ENCODE measurements at regions of chr2 and their contacts with region 1.

Region 1: DNA sequence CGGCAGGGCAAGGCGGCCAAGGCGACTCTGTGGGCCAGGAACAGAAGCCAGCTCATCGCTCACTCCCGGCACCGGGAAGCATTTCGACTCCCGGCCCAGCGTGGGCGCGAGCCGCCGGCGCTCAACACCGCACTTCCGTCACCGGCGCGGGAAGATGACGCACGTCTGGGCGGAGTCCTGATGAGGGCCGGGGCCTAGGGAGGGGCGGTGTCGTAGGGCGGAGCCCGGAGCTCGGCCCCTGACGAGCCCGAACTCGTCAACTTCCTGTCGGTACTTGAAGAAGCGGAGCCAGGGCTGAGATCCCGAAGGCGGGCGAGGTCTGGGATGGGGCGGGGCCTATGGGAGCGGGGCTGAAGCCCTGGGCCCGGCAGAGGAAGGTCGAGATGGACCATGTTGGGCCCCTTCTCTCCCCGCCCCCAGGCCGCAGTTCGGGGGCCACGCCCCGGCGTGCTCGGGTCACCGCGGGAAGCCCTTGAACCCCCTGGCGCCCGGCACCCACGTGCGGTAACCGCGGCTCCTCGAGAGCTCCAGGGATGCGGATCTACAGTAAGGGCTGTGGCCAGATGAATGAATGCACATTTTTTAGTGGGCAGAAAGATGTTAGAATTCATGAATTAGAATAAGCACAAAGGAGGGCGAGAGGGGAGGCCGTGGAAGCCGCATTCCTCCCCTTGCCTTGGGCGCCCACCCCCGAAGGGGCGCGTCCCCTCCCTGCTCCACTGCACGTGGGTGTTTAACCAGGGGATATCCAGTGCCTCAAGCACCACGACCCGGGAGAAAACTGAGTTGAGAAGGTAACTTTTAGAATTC is at the start of gene RNASEH1:
- DNase-seq: peak; percentile 98 to 99 (median 99)
- ATAC-seq: peak; percentile 99 to 100 (median 100)
- H3K4me3 ChIP-seq: peak within 1 kb of the TSS; percentile 76 to 100 (median 98)
- H3K27ac ChIP-seq: peak within 1 kb of the TSS; percentile 81 to 97 (median 90)
- H3K4me1 ChIP-seq: peaks cover 0 to 20% (median 14%) of the 10 kb centered on the region in 12 donors
- H3K27me3 ChIP-seq: no peaks in the 10 kb centered on the region
- CTCF ChIP-seq: peak in 2 of 12 donors; percentile 11 to 14
- POLR2A ChIP-seq: peak in 1 of 2 donors; percentile 86
- total RNA-seq, gene RNASEH1: 18.3 to 23.6 (median 20.0) TPM

Region 2: GRCh38 chr2:3379647-3380534 is 178.5 kb before region 1 on chr2 and contains the start of gene TRAPPC12:
- intact Hi-C with region 1: loop called in 4 of 10 experiments (anchors 5 to 10 kb)
- DNase-seq: peak; percentile 90 to 95 (median 92)
- ATAC-seq: peak; percentile 83 to 92 (median 91)
- H3K4me3 ChIP-seq: peak within 1 kb of the TSS; percentile 51 to 92 (median 84)
- H3K27ac ChIP-seq: peak within 1 kb of the TSS; percentile 42 to 96 (median 92)
- H3K4me1 ChIP-seq: peaks cover 0 to 41% (median 32%) of the 10 kb centered on the region in 12 donors
- H3K27me3 ChIP-seq: no peaks in the 10 kb centered on the region
- CTCF ChIP-seq: peak in 9 of 12 donors; percentile 23 to 66 (median 37)
- POLR2A ChIP-seq: peak in 1 of 2 donors; percentile 85
- total RNA-seq, gene TRAPPC12: 72.3 to 111 (median 88.2) TPM

Region 3: GRCh38 chr2:3518496-3519254 is 39.7 kb before region 1 on chr2:
- intact Hi-C with region 1: loop called in 1 of 10 experiments (anchors 1 kb)
- DNase-seq: peak; percentile 99 to 100 (median 99)
- ATAC-seq: peak; percentile 90 to 96 (median 96)
- H3K4me3 ChIP-seq: peak overlapping the region; percentile 74 to 99 (median 90)
- H3K27ac ChIP-seq: peak overlapping the region; percentile 97 to 100 (median 99)
- H3K4me1 ChIP-seq: peaks cover 0 to 55% (median 37%) of the 10 kb centered on the region in 12 donors
- H3K27me3 ChIP-seq: no peaks in the 10 kb centered on the region
- CTCF ChIP-seq: no peak
- POLR2A ChIP-seq: peak; percentile 52 to 66

Region 4: GRCh38 chr2:3575534-3576262 is 17.3 kb after region 1 on chr2:
- intact Hi-C with region 1: loop called in 6 of 10 experiments (anchors 1 to 2 kb)
- DNase-seq: no peak
- ATAC-seq: peak in 3 of 4 donors; percentile 1 to 42 (median 41)
- H3K4me3 ChIP-seq: peak overlapping the region; percentile 61 to 96 (median 84)
- H3K27ac ChIP-seq: peak overlapping the region; percentile 53 to 96 (median 84)
- H3K4me1 ChIP-seq: peaks cover 0 to 46% (median 32%) of the 10 kb centered on the region in 12 donors
- H3K27me3 ChIP-seq: no peaks in the 10 kb centered on the region
- CTCF ChIP-seq: no peak
- POLR2A ChIP-seq: no peak

Measured in heart left ventricle (tissue), 16 donors.